ENCODE measurements at regions of chr4 and their contacts with region 1.

Region 1: DNA sequence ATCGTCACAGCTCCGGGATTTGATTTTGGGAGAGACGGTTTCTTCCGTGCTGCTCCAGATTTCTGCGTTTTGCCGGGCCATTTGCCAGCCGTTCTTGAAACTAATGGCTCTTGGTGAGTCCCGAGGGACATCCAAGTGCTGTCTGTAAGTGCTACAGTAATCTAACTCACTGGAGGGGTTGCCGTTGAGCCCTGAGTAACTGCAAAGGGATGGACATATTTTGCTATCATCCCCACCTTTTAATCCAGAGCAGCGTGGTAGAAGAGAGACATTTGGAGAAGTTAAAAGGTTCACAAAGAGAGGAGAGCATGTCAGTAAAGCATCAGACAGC is 88.9 kb upstream of the PDLIM3 start:
- DNase-seq: peak; percentile 47 to 73 (median 67)
- ATAC-seq: peak; percentile 25 to 36
- H3K4me3 ChIP-seq: no peak overlapping the region
- H3K27ac ChIP-seq: no peak overlapping the region
- H3K4me1 ChIP-seq: no peaks in the 10 kb centered on the region
- H3K27me3 ChIP-seq: no peaks in the 10 kb centered on the region

Region 2: DNA sequence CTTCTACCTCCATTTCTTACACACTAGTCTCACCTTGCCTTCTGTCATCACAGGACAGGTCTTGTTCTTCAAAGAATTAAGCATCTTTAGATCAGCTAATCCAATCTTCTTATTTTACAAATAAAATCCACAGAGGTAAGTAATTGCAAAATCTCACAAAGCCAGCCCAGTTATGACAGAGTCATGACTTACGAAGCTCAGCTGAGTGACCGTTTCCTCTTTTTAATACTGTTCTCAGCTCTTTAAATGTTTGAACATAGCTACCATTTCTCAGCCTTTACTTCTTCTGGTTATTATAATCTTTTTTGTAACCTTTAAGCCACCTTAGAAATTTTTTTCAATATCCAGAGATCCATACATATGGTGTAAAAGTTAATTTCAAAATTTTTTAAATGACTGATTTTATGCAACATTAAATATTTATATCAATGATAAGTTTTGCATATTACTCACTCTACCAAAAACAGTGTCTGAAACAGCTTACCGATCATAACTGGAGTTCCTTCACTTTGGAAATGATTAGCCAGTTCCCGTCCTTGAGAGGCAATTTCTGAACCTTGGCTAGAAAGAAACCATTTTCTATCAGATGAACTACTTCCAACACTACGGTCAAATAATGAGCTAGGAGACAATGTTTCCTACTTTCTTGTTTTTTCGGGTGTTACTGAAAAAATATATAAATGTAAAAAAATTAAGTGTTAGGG is 218.8 kb before region 1 on chr4:
- intact Hi-C with region 1: loop called in 1 of 4 experiments (anchors 10 kb)
- DNase-seq: no peak
- ATAC-seq: no peak
- H3K4me3 ChIP-seq: no peak overlapping the region
- H3K27ac ChIP-seq: no peak overlapping the region
- H3K4me1 ChIP-seq: no peaks in the 10 kb centered on the region
- H3K27me3 ChIP-seq: no peaks in the 10 kb centered on the region